ENCODE measurements at regions of chr11 and their contacts with region 1.

Region 1: DNA sequence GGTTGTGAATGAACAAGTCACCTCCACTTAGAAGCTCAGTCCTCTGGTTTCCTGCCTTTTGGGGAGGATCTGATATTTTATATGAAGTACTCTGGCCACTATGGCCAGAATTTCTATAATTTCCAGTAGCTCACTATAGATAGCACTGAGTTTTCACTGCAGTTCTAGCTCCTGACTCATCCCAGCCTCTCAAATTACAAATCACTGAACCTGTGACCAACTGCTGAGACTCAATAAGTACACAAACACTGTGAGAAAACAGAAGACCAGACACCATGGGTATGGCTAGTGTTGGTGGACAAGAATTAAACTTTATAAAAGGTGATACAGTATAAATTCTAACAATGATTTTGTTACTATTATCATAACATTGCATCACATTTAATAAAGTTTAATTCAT is 47.1 kb upstream of the UCP3 start:
- DNase-seq: no peak
- ATAC-seq: no peak
- H3K4me3 Mint-ChIP-seq: no peak overlapping the region
- H3K27ac Mint-ChIP-seq: no peak overlapping the region
- H3K4me1 Mint-ChIP-seq: no peaks in the 10 kb centered on the region
- H3K27me3 Mint-ChIP-seq: no peaks in the 10 kb centered on the region
- CTCF ChIP-seq: no peak

Region 2: GRCh38 chr11:74011360-74012073 is 44.4 kb before region 1 on chr11:
- CTCF ChIA-PET with region 1: no interaction called
- POLR2A ChIA-PET with region 1: no interaction called
- intact Hi-C with region 1: no loop called
- DNase-seq: no peak
- ATAC-seq: peak; percentile 87
- H3K4me3 Mint-ChIP-seq: peak overlapping the region; percentile 70
- H3K27ac Mint-ChIP-seq: peak overlapping the region; percentile 92
- H3K4me1 Mint-ChIP-seq: peaks cover 74% of the 10 kb centered on the region
- H3K27me3 Mint-ChIP-seq: no peaks in the 10 kb centered on the region
- CTCF ChIP-seq: no peak

Region 3: DNA sequence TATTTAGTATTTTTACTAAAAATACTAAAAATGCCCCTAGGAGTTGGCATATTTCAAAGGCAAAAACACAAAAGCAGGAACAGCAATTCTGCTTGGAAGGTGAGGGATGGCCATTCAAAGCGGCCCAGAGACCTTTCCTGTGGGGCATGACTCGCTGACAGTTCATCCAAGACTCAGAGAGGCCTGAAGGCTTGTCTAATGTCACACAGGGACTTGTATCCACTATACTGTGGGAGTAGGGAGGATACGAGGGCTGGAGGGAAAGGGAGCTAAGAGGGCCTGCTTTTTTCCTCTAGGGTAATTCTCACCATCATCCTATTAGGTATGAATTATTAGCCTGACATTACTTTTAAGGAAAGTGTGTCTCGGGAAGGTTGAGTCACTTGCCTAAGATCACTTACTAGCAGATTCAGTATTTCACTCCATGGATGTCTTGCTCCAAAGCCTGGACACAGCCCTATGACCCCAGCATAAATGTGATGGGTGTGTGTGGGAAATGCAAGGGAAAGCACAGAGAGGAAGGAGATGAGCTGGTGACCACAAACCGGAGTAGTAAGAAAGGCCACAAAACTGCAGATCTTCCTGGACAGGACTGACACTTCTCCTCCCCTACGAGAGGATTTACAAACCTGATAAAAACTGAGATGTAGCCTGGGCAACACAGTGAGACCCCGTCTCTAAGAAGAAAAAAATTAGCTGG is 30.3 kb before region 1 on chr11:
- CTCF ChIA-PET with region 1: no interaction called
- POLR2A ChIA-PET with region 1: no interaction called
- intact Hi-C with region 1: no loop called
- DNase-seq: no peak
- ATAC-seq: no peak
- H3K4me3 Mint-ChIP-seq: no peak overlapping the region
- H3K27ac Mint-ChIP-seq: no peak overlapping the region
- H3K4me1 Mint-ChIP-seq: peaks cover 19% of the 10 kb centered on the region
- H3K27me3 Mint-ChIP-seq: no peaks in the 10 kb centered on the region
- CTCF ChIP-seq: no peak

Region 4: DNA sequence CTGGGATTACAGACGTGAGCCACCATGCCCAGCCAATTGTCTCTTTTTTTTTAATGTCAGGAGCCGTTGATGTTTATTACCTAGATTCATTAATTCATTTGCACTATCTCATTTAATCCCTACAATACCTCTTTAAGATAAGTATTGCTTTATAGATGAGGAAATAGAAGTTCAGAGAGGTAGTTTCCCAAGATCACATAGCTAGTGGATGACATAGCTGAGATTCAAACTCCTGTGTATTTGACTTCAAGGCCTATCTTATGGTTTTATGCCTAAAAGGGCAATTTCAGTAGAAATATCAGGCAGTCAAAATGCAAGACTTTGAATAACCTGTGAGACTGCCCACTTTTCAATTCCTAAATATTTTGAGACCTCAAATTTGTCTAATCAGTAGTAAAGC is 181.6 kb after region 1 on chr11:
- CTCF ChIA-PET with region 1: no interaction called
- POLR2A ChIA-PET with region 1: no interaction called
- intact Hi-C with region 1: no loop called
- DNase-seq: no peak
- ATAC-seq: no peak
- H3K4me3 Mint-ChIP-seq: no peak overlapping the region
- H3K27ac Mint-ChIP-seq: no peak overlapping the region
- H3K4me1 Mint-ChIP-seq: no peaks in the 10 kb centered on the region
- H3K27me3 Mint-ChIP-seq: no peaks in the 10 kb centered on the region
- CTCF ChIP-seq: no peak

Region 5: GRCh38 chr11:74988541-74989260 is 932.8 kb after region 1 on chr11 and contains the start of gene NEU3:
- CTCF ChIA-PET with region 1: no interaction called
- POLR2A ChIA-PET with region 1: interaction called, 10 read pairs
- intact Hi-C with region 1: no loop called
- DNase-seq: peak; percentile 69
- ATAC-seq: peak; percentile 97
- H3K4me3 Mint-ChIP-seq: peak within 1 kb of the TSS; percentile 97
- H3K27ac Mint-ChIP-seq: peak within 1 kb of the TSS; percentile 89
- H3K4me1 Mint-ChIP-seq: peaks cover 40% of the 10 kb centered on the region
- H3K27me3 Mint-ChIP-seq: no peaks in the 10 kb centered on the region
- CTCF ChIP-seq: no peak
- total RNA-seq, gene NEU3: 13.2 and 16.5 TPM in 2 replicates